ENCODE measurements at regions of chr5 and their contacts with region 1.

Region 1: DNA sequence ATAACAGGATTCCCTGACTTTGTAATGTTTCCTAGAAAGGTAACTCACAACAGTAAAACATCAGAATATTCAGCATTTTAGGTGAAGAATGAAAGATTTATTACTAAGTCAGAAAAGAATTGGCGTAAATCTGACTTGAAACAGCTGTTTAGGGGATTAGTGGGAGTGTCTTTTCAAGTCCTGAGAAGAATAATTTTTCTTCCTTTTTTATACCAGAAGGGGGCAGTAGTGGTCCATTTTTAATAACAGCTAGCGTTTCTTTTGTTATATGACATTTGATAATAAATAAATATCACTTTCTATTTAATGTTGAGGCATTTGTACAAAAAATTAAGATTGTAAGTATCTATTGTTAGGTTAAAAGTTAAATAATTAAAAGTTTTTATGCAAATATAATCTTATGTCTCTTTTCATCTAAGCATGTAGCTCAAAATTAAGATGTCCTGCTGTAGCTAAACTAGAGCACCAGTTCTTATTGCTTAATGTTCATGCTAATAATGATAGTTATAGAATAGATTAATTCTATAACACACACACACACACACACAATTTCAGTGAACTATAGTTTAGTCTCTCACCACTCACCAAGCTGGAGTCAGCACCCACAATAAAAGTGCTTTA is 258.7 kb upstream of the ARRDC3 start:
- DNase-seq: peak; percentile 41
- ATAC-seq: no peak
- H3K4me3 ChIP-seq: no peak overlapping the region
- H3K27ac ChIP-seq: no peak overlapping the region
- H3K4me1 ChIP-seq: no peaks in the 10 kb centered on the region
- H3K27me3 ChIP-seq: no peaks in the 10 kb centered on the region
- CTCF ChIP-seq: peak; percentile 60
- POLR2A ChIP-seq: no peak
- RAD21 ChIP-seq: peak; percentile 59

Region 2: GRCh38 chr5:92222449-92222848 is 580.6 kb after region 1 on chr5:
- CTCF ChIA-PET with region 1: interaction called, 4 read pairs
- POLR2A ChIA-PET with region 1: no interaction called
- dilution Hi-C with region 1: no loop called
- in situ Hi-C with region 1: no loop called
- intact Hi-C with region 1: loop called (anchors 2 kb)
- DNase-seq: peak; percentile 1
- ATAC-seq: no peak; the same call in 1 of the 2 replicates
- H3K4me3 ChIP-seq: no peak overlapping the region
- H3K27ac ChIP-seq: no peak overlapping the region
- H3K4me1 ChIP-seq: no peaks in the 10 kb centered on the region
- H3K27me3 ChIP-seq: no peaks in the 10 kb centered on the region
- CTCF ChIP-seq: no peak
- POLR2A ChIP-seq: no peak
- RAD21 ChIP-seq: no peak

Region 3: GRCh38 chr5:93596676-93597461 is 1955.0 kb after region 1 on chr5:
- CTCF ChIA-PET with region 1: no interaction called
- POLR2A ChIA-PET with region 1: no interaction called
- dilution Hi-C with region 1: no loop called
- in situ Hi-C with region 1: no loop called
- intact Hi-C with region 1: loop called (anchors 5 kb)
- DNase-seq: no peak
- ATAC-seq: no peak
- H3K4me3 ChIP-seq: no peak overlapping the region
- H3K27ac ChIP-seq: no peak overlapping the region
- H3K4me1 ChIP-seq: peaks cover 26% of the 10 kb centered on the region
- H3K27me3 ChIP-seq: no peaks in the 10 kb centered on the region
- CTCF ChIP-seq: no peak
- POLR2A ChIP-seq: no peak
- RAD21 ChIP-seq: no peak

Measured in IMR-90 (cell line).